Left lung (tissue), 14 donors: ENCODE measurements at regions of chr7 and their contacts with region 1.

Region 1: DNA sequence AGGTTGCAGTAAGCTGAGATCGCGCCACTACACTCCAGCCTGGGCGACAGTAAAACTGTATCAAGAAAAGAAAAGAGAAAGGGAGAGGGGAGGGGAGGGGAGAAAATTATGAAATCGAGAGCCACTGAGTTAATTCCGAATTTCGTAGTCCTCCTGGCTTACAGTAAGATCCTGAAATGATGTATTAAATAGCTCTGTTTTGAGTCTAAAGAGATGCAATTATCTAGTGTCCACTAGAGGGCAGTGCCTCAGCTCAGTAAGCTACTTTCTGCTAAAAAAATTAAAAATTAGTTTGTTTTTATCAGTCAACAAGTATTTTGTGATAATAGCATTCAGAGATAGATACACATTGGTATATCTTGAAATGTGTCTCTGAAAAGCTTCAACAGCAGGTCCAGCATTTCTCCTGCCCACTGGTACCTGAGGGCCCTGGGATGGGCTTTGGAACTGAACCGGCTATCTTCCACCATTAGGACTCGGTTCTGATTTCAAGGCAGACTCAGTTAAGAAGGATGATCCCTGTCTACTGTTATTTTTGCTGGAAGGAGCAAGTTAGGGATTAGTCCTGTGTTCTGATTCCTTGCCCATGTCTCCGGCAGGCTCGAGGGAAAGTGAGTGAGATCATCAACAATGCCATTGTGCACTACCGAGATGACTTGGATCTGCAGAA is 19.5 kb downstream of the TSPAN33 start:
- DNase-seq: peak in 1 of 4 donors; percentile 71
- ATAC-seq: peak; percentile 54
- H3K4me3 ChIP-seq: no peak overlapping the region
- H3K27ac ChIP-seq: no peak overlapping the region
- H3K4me1 ChIP-seq: peaks cover 0 to 6% of the 10 kb centered on the region in 2 donors
- H3K27me3 ChIP-seq: peaks cover 14 to 88% of the 10 kb centered on the region in 2 donors
- CTCF ChIP-seq: peak; percentile 66 to 81

Region 2: GRCh38 chr7:129210256-129210988 is 46.4 kb after region 1 on chr7:
- intact Hi-C with region 1: loop called in 1 of 2 experiments (anchors 5 kb)
- DNase-seq: peak; percentile 51 to 90 (median 70)
- ATAC-seq: peak; percentile 94
- H3K4me3 ChIP-seq: no peak overlapping the region
- H3K27ac ChIP-seq: no peak overlapping the region
- H3K4me1 ChIP-seq: no peaks in the 10 kb centered on the region
- H3K27me3 ChIP-seq: peaks cover 0 to 16% of the 10 kb centered on the region in 2 donors
- CTCF ChIP-seq: peak; percentile 79

Region 3: GRCh38 chr7:129351320-129351719 is 187.3 kb after region 1 on chr7:
- intact Hi-C with region 1: no loop called
- DNase-seq: no peak
- ATAC-seq: no peak
- H3K4me3 ChIP-seq: no peak overlapping the region
- H3K27ac ChIP-seq: no peak overlapping the region
- H3K4me1 ChIP-seq: no peaks in the 10 kb centered on the region
- H3K27me3 ChIP-seq: no peaks in the 10 kb centered on the region
- CTCF ChIP-seq: no peak